Calu3 (cell line): ENCODE measurements at regions of chr10 and their contacts with region 1.

Region 1: GRCh38 chr10:31928549-31929260 is at the start of gene ARHGAP12:
- DNase-seq: peak; percentile 95
- H3K4me3 Mint-ChIP-seq: peak within 1 kb of the TSS; percentile 89
- H3K27ac Mint-ChIP-seq: peak within 1 kb of the TSS; percentile 90
- H3K4me1 Mint-ChIP-seq: peaks cover 43% of the 10 kb centered on the region
- H3K27me3 Mint-ChIP-seq: no peaks in the 10 kb centered on the region
- CTCF ChIP-seq: no peak
- total RNA-seq, gene ARHGAP12: 56.0 and 60.7 TPM in 2 replicates

Region 2: GRCh38 chr10:31947144-31947926 is 18.6 kb after region 1 on chr10:
- CTCF ChIA-PET with region 1: interaction called, 13 read pairs
- intact Hi-C with region 1: no loop called
- DNase-seq: peak; percentile 53
- H3K4me3 Mint-ChIP-seq: peak overlapping the region; percentile 31
- H3K27ac Mint-ChIP-seq: peak overlapping the region; percentile 78
- H3K4me1 Mint-ChIP-seq: peaks cover 51% of the 10 kb centered on the region
- H3K27me3 Mint-ChIP-seq: no peaks in the 10 kb centered on the region
- CTCF ChIP-seq: no peak